Panc1 (cell line): ENCODE measurements at regions of chr3 and their contacts with region 1.

Region 1: DNA sequence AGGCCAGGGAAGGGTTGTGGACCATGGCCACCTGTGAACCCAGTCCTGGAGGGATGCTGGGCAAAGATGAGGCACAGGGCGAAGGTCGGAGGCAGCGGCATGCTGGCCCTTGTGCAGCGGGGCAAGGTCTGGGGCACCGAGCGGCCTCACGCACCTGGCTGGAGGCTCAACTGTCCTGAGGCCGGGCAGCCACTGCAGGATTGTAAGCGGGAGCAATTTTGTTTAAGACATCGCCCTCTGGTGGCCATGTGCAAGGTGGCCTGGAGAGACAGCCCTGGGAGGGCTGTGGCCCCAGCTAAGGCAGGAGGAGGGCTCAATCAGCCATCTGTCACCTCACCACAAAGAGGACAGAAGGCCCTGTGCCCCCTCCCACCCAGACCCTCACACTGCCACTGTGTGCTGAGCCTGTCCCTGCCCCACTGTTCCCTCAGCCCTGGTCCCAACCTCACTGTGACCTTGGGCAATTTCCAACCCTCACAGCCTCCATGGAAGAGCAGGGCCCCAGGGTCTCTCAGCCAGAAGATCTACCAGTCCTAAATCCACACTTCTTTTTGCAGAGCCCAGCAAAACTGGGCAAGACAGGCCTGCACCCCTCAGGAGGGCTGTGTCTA is 46.2 kb downstream of the TPRA1 start:
- DNase-seq: peak; percentile 41
- ATAC-seq: peak; percentile 88
- H3K4me3 ChIP-seq: no peak overlapping the region
- H3K27ac ChIP-seq: no peak overlapping the region
- H3K4me1 ChIP-seq: peaks cover 4% of the 10 kb centered on the region; the same call in 1 of the 2 replicates
- H3K27me3 ChIP-seq: no peaks in the 10 kb centered on the region; the same call in 1 of the 2 replicates
- CTCF ChIP-seq: peak; percentile 94

Region 2: DNA sequence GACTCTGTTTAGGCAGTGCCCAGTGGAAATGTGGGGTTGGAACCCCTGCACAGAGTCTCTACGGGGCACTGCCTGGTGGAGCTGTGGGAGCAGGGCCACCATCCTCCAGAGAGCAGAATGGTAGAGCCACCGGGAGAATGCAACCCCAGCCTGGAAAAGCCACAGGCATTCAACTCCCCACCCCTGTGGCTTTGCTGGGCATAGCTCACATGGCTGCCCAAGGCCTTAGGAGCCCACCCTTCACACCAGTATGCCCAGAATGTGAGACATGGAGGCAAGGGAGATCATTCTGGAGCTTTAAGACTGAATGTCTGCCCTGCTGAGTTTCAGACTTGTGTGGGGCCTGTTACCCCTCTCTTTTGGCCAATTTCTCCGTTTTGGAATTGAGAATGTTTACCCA is 859.3 kb before region 1 on chr3:
- CTCF ChIA-PET with region 1: no interaction called
- POLR2A ChIA-PET with region 1: no interaction called
- in situ Hi-C with region 1: no loop called
- intact Hi-C with region 1: loop called (anchors 5 kb)
- DNase-seq: no peak
- ATAC-seq: no peak
- H3K4me3 ChIP-seq: no peak overlapping the region
- H3K27ac ChIP-seq: no peak overlapping the region
- H3K4me1 ChIP-seq: no peaks in the 10 kb centered on the region
- H3K27me3 ChIP-seq: no peaks in the 10 kb centered on the region
- CTCF ChIP-seq: no peak

Region 3: DNA sequence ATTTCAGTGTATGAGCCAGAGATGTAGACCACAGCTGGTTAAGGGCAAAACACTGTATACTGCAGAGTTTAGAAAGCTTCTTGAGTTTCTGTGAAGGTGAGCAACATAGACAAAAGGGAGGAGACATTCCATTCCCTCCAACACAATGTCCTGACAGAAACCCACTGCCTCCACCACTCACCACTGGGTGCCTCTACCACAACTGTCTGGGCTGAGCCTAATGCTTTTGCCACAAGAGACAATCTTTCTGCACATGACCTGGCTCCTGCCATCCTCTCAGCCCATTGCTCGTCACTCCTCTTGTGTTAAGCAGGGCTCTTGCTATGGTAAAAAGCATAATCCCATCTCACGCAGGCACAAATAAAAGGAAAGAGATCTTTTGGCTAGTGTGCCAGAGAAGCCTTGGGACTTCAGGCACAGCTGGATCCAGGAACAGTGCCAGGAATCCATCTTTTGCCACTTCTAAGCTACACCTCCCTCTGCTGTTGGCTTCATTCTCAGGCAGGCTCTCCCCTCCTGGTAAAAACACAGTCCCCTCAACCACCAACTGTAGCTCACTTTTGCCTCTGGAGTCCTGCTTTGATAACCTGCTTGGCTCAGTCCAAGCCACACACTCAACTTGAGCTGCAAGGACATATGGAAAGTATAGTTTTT is 115.8 kb before region 1 on chr3:
- CTCF ChIA-PET with region 1: no interaction called
- POLR2A ChIA-PET with region 1: no interaction called
- in situ Hi-C with region 1: no loop called
- intact Hi-C with region 1: no loop called
- DNase-seq: no peak
- ATAC-seq: no peak
- H3K4me3 ChIP-seq: no peak overlapping the region
- H3K27ac ChIP-seq: no peak overlapping the region
- H3K4me1 ChIP-seq: no peaks in the 10 kb centered on the region
- H3K27me3 ChIP-seq: peaks cover 48% of the 10 kb centered on the region
- CTCF ChIP-seq: no peak

Region 4: GRCh38 chr3:127574880-127575878 is 30.9 kb after region 1 on chr3:
- CTCF ChIA-PET with region 1: interaction called, 10 read pairs
- POLR2A ChIA-PET with region 1: no interaction called
- in situ Hi-C with region 1: no loop called
- intact Hi-C with region 1: no loop called
- DNase-seq: peak; percentile 82
- ATAC-seq: peak; percentile 96
- H3K4me3 ChIP-seq: no peak overlapping the region
- H3K27ac ChIP-seq: 0 out of 2 replicates have a peak overlapping the region, but pooled peaks have one; percentile 29
- H3K4me1 ChIP-seq: peaks cover 4% of the 10 kb centered on the region; the same call in 1 of the 2 replicates
- H3K27me3 ChIP-seq: no peaks in the 10 kb centered on the region
- CTCF ChIP-seq: peak; percentile 100